ENCODE measurements at regions of chr10 and their contacts with region 1.

Region 1: DNA sequence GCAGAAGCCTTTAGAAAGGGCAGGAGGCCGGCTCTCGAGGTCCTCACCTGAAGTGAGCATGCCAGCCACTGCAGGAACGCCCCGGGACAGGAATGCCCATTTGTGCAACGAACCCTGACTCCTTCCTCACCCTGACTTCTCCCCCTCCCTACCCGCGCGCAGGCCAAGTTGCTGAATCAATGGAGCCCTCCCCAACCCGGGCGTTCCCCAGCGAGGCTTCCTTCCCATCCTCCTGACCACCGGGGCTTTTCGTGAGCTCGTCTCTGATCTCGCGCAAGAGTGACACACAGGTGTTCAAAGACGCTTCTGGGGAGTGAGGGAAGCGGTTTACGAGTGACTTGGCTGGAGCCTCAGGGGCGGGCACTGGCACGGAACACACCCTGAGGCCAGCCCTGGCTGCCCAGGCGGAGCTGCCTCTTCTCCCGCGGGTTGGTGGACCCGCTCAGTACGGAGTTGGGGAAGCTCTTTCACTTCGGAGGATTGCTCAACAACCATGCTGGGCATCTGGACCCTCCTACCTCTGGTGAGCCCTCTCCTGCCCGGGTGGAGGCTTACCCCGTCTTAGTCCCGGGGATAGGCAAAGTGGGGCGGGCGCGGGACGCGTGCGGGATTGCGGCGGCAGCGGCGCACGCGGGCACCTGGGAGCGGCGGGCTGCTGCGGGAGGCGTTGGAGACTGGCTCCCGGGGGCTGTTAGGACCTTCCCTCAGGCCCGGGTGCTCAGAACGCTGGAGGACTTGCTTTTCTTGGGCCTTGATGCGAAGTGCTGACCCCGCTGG is at the start of gene FAS:
- DNase-seq: peak; percentile 95
- H3K4me3 Mint-ChIP-seq: peak within 1 kb of the TSS; percentile 86
- H3K27ac Mint-ChIP-seq: peak within 1 kb of the TSS; percentile 93
- H3K4me1 Mint-ChIP-seq: peaks cover 23% of the 10 kb centered on the region
- H3K27me3 Mint-ChIP-seq: no peaks in the 10 kb centered on the region
- CTCF ChIP-seq: no peak
- total RNA-seq, gene FAS: 55.6 and 60.2 TPM in 2 replicates

Region 2: GRCh38 chr10:88880282-88881076 is 110.1 kb before region 1 on chr10:
- CTCF ChIA-PET with region 1: interaction called, 9 read pairs
- POLR2A ChIA-PET with region 1: interaction called, 63 read pairs
- intact Hi-C with region 1: no loop called
- DNase-seq: peak; percentile 84
- H3K4me3 Mint-ChIP-seq: peak overlapping the region; percentile 97
- H3K27ac Mint-ChIP-seq: peak overlapping the region; percentile 91
- H3K4me1 Mint-ChIP-seq: peaks cover 29% of the 10 kb centered on the region
- H3K27me3 Mint-ChIP-seq: no peaks in the 10 kb centered on the region
- CTCF ChIP-seq: no peak

Region 3: DNA sequence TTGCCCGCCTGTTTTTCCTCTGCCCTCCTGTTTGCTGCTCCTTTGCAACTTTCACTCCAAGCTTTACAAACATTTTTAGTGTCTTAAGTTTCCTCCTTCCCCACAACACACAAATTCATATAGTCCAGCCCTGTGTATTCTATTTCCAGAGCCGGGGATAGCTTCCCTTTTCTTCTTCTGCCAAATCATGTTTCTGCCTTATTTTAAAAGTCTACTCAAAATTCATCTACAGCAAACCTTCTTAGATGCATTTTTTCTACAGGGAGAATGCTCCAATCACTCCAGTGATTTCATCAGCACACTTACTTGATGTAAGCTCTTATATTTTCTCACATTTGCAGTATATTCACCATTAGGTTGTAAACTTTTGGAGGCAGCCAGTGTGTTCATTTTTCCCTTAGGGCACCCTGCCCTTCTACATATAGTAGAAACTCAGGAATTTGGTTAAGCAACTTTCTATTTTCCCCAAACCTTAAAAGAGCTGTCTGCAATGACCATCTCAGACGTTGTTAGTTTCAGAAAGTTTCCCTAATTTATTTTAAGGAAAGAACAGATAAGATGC is 25.6 kb before region 1 on chr10:
- CTCF ChIA-PET with region 1: interaction called, 4 read pairs
- POLR2A ChIA-PET with region 1: interaction called, 14 read pairs
- intact Hi-C with region 1: no loop called
- DNase-seq: no peak
- H3K4me3 Mint-ChIP-seq: no peak overlapping the region
- H3K27ac Mint-ChIP-seq: no peak overlapping the region
- H3K4me1 Mint-ChIP-seq: peaks cover 11% of the 10 kb centered on the region
- H3K27me3 Mint-ChIP-seq: no peaks in the 10 kb centered on the region
- CTCF ChIP-seq: no peak

Region 4: DNA sequence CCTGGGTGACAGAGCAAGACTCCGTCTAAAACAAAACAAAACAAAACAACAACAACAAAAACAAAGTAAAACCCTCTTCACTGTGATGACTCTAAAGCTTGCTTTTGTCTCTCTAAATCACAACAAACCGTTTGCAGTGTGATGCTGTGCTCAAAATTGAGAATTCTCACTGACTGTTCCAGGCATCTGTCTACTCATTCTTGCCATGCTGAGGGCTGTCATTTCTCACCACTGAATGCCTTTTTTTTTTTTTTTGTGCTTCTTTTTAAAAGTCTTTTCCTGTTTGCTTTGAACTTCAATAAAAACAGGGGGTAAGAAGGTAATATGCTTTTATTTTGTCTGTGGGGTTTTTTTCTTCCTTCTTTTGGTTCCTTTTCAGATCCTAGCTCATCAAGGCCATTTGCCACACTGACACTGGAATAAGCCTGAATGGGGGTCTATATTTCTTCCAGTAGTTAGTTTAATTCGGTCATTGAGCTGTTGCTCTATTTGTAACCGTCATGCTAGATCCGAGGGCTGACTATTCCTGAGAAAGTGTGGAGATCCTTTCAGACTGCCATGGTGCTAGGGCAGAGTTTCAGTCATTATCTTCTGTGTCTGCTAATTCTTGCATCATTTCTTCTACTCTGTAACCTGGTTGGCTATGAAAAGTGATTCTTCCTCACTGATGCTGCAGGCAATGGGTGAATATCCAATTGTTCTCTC is 10.6 kb after region 1 on chr10:
- CTCF ChIA-PET with region 1: interaction called, 5 read pairs
- POLR2A ChIA-PET with region 1: interaction called, 41 read pairs
- intact Hi-C with region 1: no loop called
- DNase-seq: no peak
- H3K4me3 Mint-ChIP-seq: no peak overlapping the region
- H3K27ac Mint-ChIP-seq: peak overlapping the region; percentile 89
- H3K4me1 Mint-ChIP-seq: peaks cover 30% of the 10 kb centered on the region
- H3K27me3 Mint-ChIP-seq: no peaks in the 10 kb centered on the region
- CTCF ChIP-seq: no peak

Region 5: DNA sequence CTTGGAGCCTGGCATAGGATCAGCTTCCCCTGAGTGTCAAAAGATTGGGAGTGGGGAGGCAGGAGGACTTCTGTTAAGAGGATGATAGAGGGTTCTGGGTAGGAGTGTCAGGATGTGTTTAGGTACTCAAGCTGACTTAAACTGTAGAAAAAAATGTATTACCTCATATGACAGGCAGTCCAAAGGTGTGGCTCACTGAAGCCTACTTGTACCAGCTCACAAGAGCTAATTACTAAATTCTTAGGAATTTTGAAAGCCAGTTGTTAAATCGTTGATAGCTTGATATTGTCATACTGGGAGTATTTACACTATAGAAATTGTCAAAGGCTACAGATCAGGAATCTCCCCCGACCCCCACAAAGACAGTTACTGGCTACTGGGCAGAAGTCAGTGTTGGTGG is 32.2 kb after region 1 on chr10:
- CTCF ChIA-PET with region 1: interaction called, 6 read pairs
- POLR2A ChIA-PET with region 1: interaction called, 26 read pairs
- intact Hi-C with region 1: loop called (anchors 2 kb)
- DNase-seq: no peak
- H3K4me3 Mint-ChIP-seq: no peak overlapping the region
- H3K27ac Mint-ChIP-seq: no peak overlapping the region
- H3K4me1 Mint-ChIP-seq: peaks cover 24% of the 10 kb centered on the region
- H3K27me3 Mint-ChIP-seq: no peaks in the 10 kb centered on the region
- CTCF ChIP-seq: no peak

Region 6: DNA sequence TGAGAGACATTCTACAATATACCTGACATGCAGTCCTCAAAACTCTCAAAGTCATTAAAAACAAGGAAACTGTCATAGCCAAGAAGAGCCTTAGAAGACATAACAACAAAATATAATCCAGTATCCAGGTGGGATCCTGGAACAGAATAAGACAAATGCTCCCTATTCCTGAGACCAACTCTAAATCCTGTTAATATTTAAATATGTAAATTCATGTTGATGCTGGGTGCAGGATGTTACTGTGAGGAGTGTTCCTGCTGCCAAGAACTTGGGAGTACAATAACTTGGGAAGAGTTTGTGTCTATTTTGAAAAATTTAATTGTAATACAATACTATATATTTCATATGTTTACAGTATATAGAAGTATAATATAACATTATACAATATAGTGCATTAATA is 61.0 kb after region 1 on chr10:
- CTCF ChIA-PET with region 1: no interaction called
- POLR2A ChIA-PET with region 1: no interaction called
- intact Hi-C with region 1: no loop called
- DNase-seq: no peak
- H3K4me3 Mint-ChIP-seq: no peak overlapping the region
- H3K27ac Mint-ChIP-seq: no peak overlapping the region
- H3K4me1 Mint-ChIP-seq: no peaks in the 10 kb centered on the region
- H3K27me3 Mint-ChIP-seq: no peaks in the 10 kb centered on the region
- CTCF ChIP-seq: no peak

Region 7: DNA sequence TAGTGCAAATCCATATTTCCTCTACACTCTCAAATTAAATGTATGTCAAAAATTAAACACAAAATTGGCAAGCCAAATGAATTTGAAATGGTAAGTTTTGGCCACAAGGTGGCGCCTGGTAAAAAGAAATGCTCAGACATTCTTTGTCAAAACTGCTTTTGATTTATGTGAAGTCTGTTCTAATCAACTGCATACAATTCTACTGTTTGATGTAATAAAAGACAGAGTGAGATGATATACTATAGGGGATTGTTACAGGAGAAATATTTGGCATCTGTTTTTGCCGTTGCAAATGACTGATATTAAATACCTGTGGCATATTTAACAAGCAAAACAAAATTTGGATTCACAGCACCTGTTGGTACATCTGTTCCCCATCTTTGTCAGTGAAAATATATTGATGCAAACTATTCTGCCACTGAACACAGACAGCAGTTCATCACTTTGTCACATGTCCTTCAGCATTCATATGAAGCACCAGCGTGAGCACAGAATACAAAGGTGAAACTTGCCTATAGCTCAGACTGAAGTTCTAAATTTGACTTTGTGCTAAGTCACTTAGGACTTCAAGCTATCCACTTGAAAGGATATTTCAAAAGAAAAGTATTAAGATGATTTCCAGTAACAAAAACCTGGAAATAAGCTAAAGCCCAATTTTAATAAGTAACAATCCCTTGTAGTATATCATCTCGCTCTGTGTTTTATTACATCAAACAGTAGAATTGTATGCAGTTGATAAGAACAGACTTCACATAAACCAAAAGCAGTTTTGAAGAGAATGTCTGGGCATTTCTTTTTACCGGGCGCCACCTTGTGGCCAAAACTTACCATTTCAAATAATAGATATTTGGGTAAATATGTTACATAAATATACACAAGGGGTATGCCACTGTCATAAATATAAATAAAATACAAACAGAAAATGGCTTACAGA is 226.8 kb after region 1 on chr10:
- CTCF ChIA-PET with region 1: interaction called, 12 read pairs
- POLR2A ChIA-PET with region 1: interaction called, 11 read pairs
- intact Hi-C with region 1: loop called (anchors 1 kb)
- DNase-seq: peak; percentile 73
- H3K4me3 Mint-ChIP-seq: no peak overlapping the region
- H3K27ac Mint-ChIP-seq: no peak overlapping the region
- H3K4me1 Mint-ChIP-seq: peaks cover 7% of the 10 kb centered on the region
- H3K27me3 Mint-ChIP-seq: no peaks in the 10 kb centered on the region
- CTCF ChIP-seq: peak; percentile 55

Measured in MCF 10A (cell line).